CD4-positive, alpha-beta T cell (primary cell): ENCODE measurements at regions of chr19 and their contacts with region 1.

Region 1: GRCh38 chr19:43595999-43596841 is at the starts of genes IRGQ and ZNF576:
- DNase-seq: peak; percentile 99 to 100 (median 100)
- ATAC-seq: peak; percentile 73
- H3K4me3 ChIP-seq: peak within 1 kb of the TSS; percentile 73
- H3K4me3 Mint-ChIP-seq: peak within 1 kb of the TSS; percentile 96
- H3K27ac ChIP-seq: peak within 1 kb of the TSS; percentile 97
- H3K27ac Mint-ChIP-seq: peak within 1 kb of the TSS; percentile 100
- H3K4me1 ChIP-seq: peaks cover 44% of the 10 kb centered on the region
- H3K4me1 Mint-ChIP-seq: peaks cover 44% of the 10 kb centered on the region
- H3K27me3 ChIP-seq: no peaks in the 10 kb centered on the region
- H3K27me3 Mint-ChIP-seq: no peaks in the 10 kb centered on the region
- CTCF ChIP-seq: no peak
- total RNA-seq, gene IRGQ: 28.9 to 29.8 TPM
- total RNA-seq, gene ZNF576: 4.1 to 4.8 TPM

Region 2: DNA sequence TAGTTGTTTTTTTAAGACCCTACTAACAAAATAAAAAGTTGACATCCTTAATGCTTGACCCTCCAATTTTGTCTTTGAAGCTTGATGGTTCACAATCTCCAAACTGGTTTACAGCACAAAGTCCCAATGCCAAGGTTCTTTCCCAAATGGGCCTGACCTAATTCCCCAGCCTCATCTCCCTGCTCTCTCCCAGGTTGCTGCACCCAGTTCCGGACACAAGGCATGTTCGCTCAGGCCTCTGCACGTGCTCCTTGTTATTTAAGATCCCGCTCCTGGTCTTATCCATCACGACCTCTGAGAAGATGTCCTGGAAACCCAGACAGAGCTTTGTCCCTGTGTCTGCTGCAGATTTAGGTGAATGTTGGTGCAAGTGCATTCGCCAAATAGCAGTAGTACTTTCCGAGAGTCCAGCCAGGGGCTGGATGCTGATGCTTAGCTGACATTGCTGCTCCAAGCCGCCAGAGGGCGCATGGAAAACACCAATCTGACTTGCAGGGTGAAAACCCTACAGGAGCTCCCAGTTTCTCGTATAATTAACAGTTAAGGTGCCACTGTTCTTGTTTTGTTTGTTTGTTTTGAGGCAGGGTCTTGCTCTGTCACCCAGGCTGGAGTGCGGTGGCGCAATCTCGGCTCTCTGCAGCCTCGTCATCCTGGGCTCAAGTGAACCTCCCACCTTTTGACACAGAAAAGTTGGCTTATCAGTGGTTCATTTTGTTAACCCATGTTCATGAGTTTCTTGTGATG is 149.3 kb before region 1 on chr19:
- CTCF ChIA-PET with region 1: interaction called, 8 read pairs
- POLR2A ChIA-PET with region 1: interaction called, 6 read pairs
- intact Hi-C with region 1: loop called (anchors 1 kb)
- DNase-seq: peak; percentile 74 to 91 (median 79)
- ATAC-seq: peak; percentile 86
- H3K4me3 ChIP-seq: no peak overlapping the region
- H3K4me3 Mint-ChIP-seq: no peak overlapping the region
- H3K27ac ChIP-seq: no peak overlapping the region
- H3K27ac Mint-ChIP-seq: peak overlapping the region; percentile 81
- H3K4me1 ChIP-seq: peaks cover 19% of the 10 kb centered on the region
- H3K4me1 Mint-ChIP-seq: peaks cover 39% of the 10 kb centered on the region
- H3K27me3 ChIP-seq: no peaks in the 10 kb centered on the region
- H3K27me3 Mint-ChIP-seq: no peaks in the 10 kb centered on the region
- CTCF ChIP-seq: peak; percentile 97

Region 3: GRCh38 chr19:43519436-43520088 is 76.7 kb before region 1 on chr19:
- CTCF ChIA-PET with region 1: interaction called, 23 read pairs
- POLR2A ChIA-PET with region 1: interaction called, 3 read pairs
- intact Hi-C with region 1: no loop called
- DNase-seq: peak; percentile 71 to 91 (median 78)
- ATAC-seq: peak; percentile 99
- H3K4me3 ChIP-seq: no peak overlapping the region
- H3K4me3 Mint-ChIP-seq: no peak overlapping the region
- H3K27ac ChIP-seq: no peak overlapping the region
- H3K27ac Mint-ChIP-seq: peak overlapping the region; percentile 25
- H3K4me1 ChIP-seq: peaks cover 10% of the 10 kb centered on the region
- H3K4me1 Mint-ChIP-seq: peaks cover 11% of the 10 kb centered on the region
- H3K27me3 ChIP-seq: no peaks in the 10 kb centered on the region
- H3K27me3 Mint-ChIP-seq: no peaks in the 10 kb centered on the region
- CTCF ChIP-seq: peak; percentile 92

Region 4: GRCh38 chr19:43555185-43555770 is 40.9 kb before region 1 on chr19:
- CTCF ChIA-PET with region 1: interaction called, 122 read pairs
- POLR2A ChIA-PET with region 1: interaction called, 52 read pairs
- intact Hi-C with region 1: loop called (anchors 1 kb)
- DNase-seq: peak; percentile 76 to 91 (median 82)
- ATAC-seq: peak; percentile 100
- H3K4me3 ChIP-seq: no peak overlapping the region
- H3K4me3 Mint-ChIP-seq: peak overlapping the region; percentile 8
- H3K27ac ChIP-seq: no peak overlapping the region
- H3K27ac Mint-ChIP-seq: peak overlapping the region; percentile 15
- H3K4me1 ChIP-seq: peaks cover 7% of the 10 kb centered on the region
- H3K4me1 Mint-ChIP-seq: peaks cover 13% of the 10 kb centered on the region
- H3K27me3 ChIP-seq: no peaks in the 10 kb centered on the region
- H3K27me3 Mint-ChIP-seq: no peaks in the 10 kb centered on the region
- CTCF ChIP-seq: peak; percentile 82

Region 5: GRCh38 chr19:43619262-43620060 is 23.2 kb after region 1 on chr19 and contains the start of gene ZNF428:
- CTCF ChIA-PET with region 1: interaction called, 12 read pairs
- POLR2A ChIA-PET with region 1: interaction called, 3 read pairs
- intact Hi-C with region 1: loop called (anchors 1 to 2 kb)
- DNase-seq: peak; percentile 69 to 95 (median 82)
- ATAC-seq: peak; percentile 84
- H3K4me3 ChIP-seq: peak within 1 kb of the TSS; percentile 100
- H3K4me3 Mint-ChIP-seq: peak within 1 kb of the TSS; percentile 98
- H3K27ac ChIP-seq: peak within 1 kb of the TSS; percentile 91 to 92
- H3K27ac Mint-ChIP-seq: peak within 1 kb of the TSS; percentile 98
- H3K4me1 ChIP-seq: peaks cover 26% of the 10 kb centered on the region
- H3K4me1 Mint-ChIP-seq: peaks cover 55% of the 10 kb centered on the region
- H3K27me3 ChIP-seq: no peaks in the 10 kb centered on the region
- H3K27me3 Mint-ChIP-seq: no peaks in the 10 kb centered on the region
- CTCF ChIP-seq: no peak
- total RNA-seq, gene ZNF428: 22.3 to 24.8 TPM